HAP-1 (cell line): ENCODE measurements at regions of chr1 and their contacts with region 1.

Region 1: DNA sequence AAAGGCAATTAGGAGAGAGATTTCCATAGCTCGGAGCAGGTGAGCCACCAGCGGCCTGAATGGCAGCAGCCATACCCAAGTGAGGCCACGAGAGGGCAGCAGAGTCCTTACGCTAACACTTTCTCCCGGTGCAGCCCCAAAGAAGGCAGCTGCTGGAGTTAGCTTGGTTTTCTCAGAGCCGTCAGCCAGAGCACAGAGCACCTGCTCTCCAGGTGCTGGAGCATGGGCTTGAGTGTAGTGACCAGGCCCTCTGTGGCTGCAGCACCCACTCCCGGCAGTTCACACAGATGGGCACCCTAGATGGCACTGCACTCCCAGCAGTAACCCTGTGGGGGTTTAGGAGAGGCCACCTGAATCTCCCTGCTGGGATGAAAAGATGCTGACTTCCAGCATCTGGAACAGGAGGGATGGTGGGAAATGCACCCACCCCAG is 45.8 kb downstream of the TMCC2 start:
- DNase-seq: peak; percentile 75 to 89
- H3K4me3 ChIP-seq: no peak overlapping the region
- H3K4me1 ChIP-seq: peaks cover 6% of the 10 kb centered on the region; the same call in 1 of the 2 replicates
- H3K27me3 ChIP-seq: no peaks in the 10 kb centered on the region

Region 2: DNA sequence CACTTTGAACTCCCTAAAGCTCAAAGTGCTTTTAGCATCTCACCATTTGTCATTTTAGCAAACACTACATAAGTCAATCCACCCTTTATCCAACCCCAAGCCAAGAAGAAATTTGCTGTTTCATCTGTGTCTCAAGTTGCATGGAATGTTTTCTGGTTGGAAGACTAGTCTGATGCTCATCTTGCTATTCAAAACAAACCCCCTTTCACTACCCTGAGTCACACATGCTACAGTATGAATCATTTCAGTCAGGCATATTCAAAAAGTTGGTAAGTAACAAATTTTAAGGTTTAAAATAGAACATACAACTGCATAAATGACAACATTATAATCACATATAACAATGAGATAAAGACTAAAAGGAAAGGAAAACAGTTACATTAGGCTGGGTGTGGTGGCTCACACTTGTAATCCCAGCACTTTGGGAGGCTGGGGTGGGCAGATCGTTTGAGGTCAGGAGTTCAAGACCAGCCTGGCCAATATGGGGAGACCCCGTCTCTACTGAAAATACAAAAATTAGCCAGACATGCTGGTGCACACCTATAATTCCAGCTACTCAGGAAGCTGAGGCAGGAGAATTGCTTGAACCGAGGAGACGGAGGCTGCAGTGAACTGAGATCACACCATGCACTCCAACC is 100.7 kb before region 1 on chr1:
- in situ Hi-C with region 1: no loop called
- DNase-seq: no peak
- H3K4me3 ChIP-seq: no peak overlapping the region
- H3K4me1 ChIP-seq: peaks cover 2% of the 10 kb centered on the region; the same call in 1 of the 2 replicates
- H3K27me3 ChIP-seq: no peaks in the 10 kb centered on the region

Region 3: GRCh38 chr1:205325334-205325884 is 51.8 kb after region 1 on chr1:
- in situ Hi-C with region 1: loop called (anchors 5 kb)
- DNase-seq: peak; percentile 68 to 85
- H3K4me3 ChIP-seq: no peak overlapping the region
- H3K4me1 ChIP-seq: peaks cover 7% of the 10 kb centered on the region
- H3K27me3 ChIP-seq: peaks cover 2% of the 10 kb centered on the region; the same call in 1 of the 2 replicates

Region 4: DNA sequence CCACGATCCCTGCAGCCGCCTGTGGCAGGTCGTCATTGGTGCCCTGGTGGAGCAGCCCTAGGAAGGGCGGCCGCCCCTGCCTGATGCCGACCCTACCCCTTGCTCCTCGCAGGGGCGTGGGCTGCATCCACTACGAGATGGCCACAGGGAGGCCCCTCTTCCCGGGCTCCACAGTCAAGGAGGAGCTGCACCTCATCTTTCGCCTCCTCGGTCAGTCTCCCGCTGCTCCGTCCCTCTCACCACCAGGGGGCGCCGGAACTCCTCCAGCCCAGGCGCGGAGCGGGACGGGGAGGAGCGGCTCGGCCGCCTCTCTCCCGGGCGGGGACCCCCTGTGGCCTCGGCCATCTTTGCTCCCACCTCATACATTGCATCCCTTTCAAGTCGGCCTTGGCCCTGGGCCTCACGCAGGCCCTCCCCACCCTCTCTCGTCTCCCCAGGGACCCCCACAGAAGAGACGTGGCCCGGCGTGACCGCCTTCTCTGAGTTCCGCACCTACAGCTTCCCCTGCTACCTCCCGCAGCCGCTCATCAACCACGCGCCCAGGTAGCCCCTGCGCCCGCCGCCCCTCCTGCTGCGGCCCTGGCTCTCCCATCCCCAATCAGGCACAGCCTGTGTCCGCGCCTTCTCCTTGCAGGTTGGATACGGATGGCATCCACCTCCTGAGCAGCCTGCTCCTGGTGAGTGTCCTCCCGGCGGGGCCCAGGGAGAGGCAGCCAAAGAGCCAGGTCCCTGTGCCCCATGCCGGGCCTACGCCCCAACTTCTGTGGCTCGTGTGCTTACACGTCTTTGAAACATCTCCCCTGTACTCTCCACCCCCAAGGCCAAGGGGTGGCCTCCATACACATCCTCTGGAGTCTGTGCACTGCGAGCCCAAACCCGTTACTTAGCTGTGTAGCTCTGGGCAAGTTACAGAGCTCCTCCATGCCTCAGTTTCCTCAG is 255.6 kb after region 1 on chr1:
- in situ Hi-C with region 1: loop called (anchors 10 kb)
- DNase-seq: peak; percentile 70 to 95
- H3K4me3 ChIP-seq: peak overlapping the region; percentile 22
- H3K4me1 ChIP-seq: peaks cover 12% of the 10 kb centered on the region
- H3K27me3 ChIP-seq: no peaks in the 10 kb centered on the region